ENCODE measurements at regions of chr16 and their contacts with region 1.

Region 1: DNA sequence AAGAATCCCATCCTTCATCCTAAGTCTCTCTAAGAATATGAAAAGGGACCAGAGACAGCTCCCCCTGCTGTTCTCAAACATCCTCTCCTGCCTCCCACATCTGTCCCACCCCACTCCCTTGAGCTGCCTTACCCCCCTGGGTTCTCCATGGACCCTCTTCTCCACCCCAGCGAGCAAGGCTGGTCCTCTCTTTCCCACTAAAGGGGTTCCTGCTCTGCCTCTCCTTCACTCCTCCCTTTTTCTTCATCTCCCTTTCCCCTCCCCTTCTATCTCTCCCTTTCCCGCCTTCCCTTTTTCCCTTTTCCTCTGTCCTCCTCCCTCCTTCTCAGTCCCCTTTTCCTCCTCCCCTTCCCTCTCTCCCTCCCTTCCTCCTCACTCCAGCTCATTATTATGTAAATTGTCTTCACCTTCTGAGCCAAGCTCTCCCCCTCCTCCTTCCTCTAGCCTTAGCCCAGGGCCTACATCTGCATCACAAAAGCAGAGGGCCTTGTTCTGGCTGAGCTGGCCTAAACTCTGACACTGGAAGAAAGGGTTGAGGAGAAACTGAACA is 90.0 kb downstream of the GNAO1 start:
- DNase-seq: peak; percentile 73
- ATAC-seq: peak; percentile 93
- H3K4me3 Mint-ChIP-seq: peak overlapping the region; percentile 54; the same call in 1 of the 2 replicates
- H3K27ac Mint-ChIP-seq: peak overlapping the region; percentile 57
- H3K4me1 Mint-ChIP-seq: peaks cover 93% of the 10 kb centered on the region
- H3K27me3 Mint-ChIP-seq: no peaks in the 10 kb centered on the region
- CTCF ChIP-seq: no peak

Region 2: DNA sequence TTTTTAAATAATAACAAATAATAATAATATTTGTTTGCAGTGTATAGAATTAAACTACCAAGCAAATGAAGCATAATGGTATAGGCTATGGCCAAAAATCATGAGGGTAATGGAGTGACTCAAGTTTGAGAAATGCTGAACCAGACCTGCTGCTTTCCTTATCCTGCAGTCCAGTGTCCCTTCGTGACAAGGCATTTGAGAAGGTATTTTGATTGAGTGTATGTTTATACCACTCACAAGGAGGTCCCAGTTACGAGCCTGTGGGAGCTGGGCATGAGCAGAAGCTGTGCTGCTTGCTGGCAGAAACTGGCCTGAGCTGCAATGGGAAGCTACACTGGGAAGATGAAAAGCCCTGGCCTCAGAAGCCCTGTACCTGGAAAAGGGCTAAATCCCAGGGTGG is 39.7 kb before region 1 on chr16:
- CTCF ChIA-PET with region 1: no interaction called
- POLR2A ChIA-PET with region 1: no interaction called
- DNase-seq: no peak
- ATAC-seq: no peak
- H3K4me3 Mint-ChIP-seq: no peak overlapping the region
- H3K27ac Mint-ChIP-seq: no peak overlapping the region
- H3K4me1 Mint-ChIP-seq: peaks cover 27% of the 10 kb centered on the region
- H3K27me3 Mint-ChIP-seq: no peaks in the 10 kb centered on the region
- CTCF ChIP-seq: no peak

Region 3: DNA sequence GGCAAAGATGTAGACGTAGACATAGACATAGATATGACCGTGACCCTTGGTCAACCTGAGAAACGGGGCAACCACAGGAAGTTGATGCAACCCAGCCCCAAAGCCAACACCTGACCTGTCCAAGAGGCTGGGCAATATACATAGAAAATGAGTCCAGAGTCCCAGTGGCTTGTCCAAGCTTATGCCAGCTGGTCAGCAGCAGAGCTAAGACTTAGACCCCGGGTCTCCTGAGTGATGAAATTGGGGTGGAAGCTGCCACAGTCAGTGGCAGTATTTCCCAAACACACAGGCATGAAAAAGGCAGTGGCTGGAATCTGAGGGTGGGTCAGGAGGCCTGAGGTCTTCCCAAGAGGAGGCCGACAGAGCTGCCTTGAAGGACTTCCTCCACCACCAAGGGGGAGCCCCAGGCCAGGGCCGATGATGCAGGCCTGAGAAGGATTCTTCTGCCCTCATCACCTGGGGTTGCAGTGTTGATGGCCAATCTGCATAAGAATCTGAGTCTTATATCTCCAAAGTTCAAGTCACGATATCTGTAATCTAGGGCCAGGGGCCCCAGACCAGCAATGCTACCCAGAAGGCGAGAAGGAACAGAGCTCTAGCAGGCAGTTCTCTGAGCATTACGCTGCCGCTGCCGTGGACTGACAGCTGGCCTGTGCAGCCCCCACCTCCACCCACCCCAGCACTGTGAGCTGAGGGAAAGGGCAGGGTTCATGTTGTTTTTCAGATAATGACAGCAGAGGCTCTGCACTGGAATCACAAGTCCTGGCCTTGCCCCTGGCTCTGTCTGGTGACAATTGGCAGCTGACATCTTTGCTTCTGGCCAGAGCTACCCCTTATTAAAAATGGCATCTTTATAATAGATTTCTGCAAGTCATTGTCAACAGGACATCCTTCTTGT is 17.4 kb before region 1 on chr16:
- CTCF ChIA-PET with region 1: interaction called, 16 read pairs
- POLR2A ChIA-PET with region 1: no interaction called
- DNase-seq: no peak
- ATAC-seq: peak; percentile 32; the same call in 1 of the 2 replicates
- H3K4me3 Mint-ChIP-seq: no peak overlapping the region
- H3K27ac Mint-ChIP-seq: no peak overlapping the region
- H3K4me1 Mint-ChIP-seq: peaks cover 25% of the 10 kb centered on the region
- H3K27me3 Mint-ChIP-seq: no peaks in the 10 kb centered on the region
- CTCF ChIP-seq: no peak

Region 4: DNA sequence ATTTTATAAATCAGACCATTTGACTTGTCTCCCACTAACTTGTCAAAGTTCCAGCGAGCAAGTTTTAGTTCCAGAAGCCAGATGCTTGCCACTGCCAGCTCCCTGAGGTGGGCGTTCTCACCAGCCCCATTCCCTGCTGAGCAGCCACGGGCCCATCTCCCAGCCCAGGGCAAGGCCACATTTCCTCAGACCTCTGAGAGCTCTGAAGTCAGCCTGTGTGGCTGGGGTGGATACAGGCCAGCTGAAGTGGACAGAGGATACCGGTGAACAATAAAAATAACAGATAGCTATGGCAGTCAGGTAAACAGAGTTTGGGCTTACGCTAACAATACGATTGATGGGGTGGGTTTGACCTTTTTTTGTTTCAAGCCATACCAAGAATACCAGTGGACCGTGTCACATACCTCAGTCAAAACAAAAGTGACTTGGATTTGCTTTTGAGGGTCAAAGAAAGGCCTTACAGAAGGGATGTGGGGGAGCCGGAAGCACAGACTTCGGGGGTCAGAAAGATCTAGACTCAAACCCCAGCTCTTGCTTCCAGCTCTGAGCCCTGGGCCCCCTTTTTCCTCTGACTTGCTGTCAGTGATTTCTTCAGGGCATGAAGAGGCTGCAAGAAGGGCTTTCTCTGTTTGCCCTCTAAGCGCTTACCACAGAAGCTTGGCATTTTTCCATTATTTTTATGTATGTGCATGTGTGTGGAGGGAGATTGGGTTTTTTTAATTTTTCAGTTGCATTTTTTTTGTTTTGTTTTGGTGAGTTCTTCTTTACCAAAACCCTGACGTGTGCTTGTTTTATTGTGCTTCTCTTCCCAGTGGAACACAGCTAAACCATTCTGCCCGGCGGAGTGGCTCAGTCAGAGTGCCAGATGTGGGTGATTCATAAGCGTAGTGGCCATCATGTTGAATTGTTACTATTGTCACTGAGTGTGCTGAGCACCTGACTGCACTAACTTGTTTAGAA is 19.8 kb after region 1 on chr16:
- CTCF ChIA-PET with region 1: interaction called, 14 read pairs
- POLR2A ChIA-PET with region 1: interaction called, 3 read pairs
- DNase-seq: no peak
- ATAC-seq: no peak
- H3K4me3 Mint-ChIP-seq: no peak overlapping the region
- H3K27ac Mint-ChIP-seq: no peak overlapping the region
- H3K4me1 Mint-ChIP-seq: peaks cover 28% of the 10 kb centered on the region
- H3K27me3 Mint-ChIP-seq: peaks cover 10% of the 10 kb centered on the region
- CTCF ChIP-seq: no peak

Region 5: DNA sequence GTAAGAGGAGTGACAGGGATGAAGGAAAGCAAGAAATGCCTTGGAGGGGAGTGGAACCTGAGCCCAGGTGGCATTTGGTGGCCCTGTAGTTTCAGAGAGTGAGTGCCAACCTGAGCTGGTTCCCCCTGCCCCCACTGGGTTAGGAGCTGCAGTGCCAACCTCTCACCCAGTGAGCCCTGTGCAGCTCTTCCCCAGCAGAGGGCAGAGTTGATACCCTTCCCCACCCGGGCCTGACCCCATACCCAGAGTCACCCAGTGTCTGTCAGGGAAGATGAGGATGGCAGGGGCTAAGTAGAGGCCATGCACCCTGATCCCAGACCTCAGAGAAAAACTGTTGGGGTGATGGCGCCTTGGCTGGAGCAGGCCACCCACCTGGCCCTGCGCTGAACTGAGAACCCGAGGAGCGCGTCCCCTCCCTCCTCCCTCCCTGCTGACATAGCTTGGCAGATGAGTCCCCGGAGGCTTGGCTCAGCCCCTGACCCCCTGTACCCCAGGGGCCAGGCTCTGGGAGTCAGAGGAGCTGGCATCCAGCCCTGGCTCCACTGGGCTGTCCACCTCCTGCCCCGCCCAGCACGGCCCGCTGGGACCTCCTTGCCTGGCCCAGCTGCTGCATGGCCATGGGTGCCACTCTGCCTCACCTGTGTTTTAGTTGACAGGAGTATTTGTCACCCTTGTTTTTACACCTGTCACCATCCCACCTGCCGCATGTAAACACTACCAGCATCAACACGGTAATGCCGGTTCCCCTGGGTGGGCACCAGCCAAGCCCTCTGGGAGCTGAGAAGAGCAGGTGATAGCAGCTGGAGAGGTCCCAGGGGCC is 30.1 kb after region 1 on chr16:
- CTCF ChIA-PET with region 1: interaction called, 17 read pairs
- POLR2A ChIA-PET with region 1: no interaction called
- DNase-seq: peak; percentile 37
- ATAC-seq: peak; percentile 93
- H3K4me3 Mint-ChIP-seq: no peak overlapping the region
- H3K27ac Mint-ChIP-seq: no peak overlapping the region
- H3K4me1 Mint-ChIP-seq: peaks cover 2% of the 10 kb centered on the region; the same call in 1 of the 2 replicates
- H3K27me3 Mint-ChIP-seq: no peaks in the 10 kb centered on the region
- CTCF ChIP-seq: no peak

Region 6: GRCh38 chr16:56317998-56318826 is 36.9 kb after region 1 on chr16:
- CTCF ChIA-PET with region 1: interaction called, 17 read pairs
- POLR2A ChIA-PET with region 1: no interaction called
- DNase-seq: peak; percentile 88
- ATAC-seq: peak; percentile 98
- H3K4me3 Mint-ChIP-seq: peak overlapping the region; percentile 64
- H3K27ac Mint-ChIP-seq: no peak overlapping the region
- H3K4me1 Mint-ChIP-seq: peaks cover 5% of the 10 kb centered on the region
- H3K27me3 Mint-ChIP-seq: peaks cover 9% of the 10 kb centered on the region
- CTCF ChIP-seq: peak; percentile 96

Measured in WTC11 (cell line).